ENCODE measurements at regions of chr11 and their contacts with region 1.

Region 1: GRCh38 chr11:12963792-12964536 is 45.2 kb upstream of the RASSF10 start:
- DNase-seq: peak; percentile 80
- ATAC-seq: peak; percentile 93
- H3K4me3 ChIP-seq: no peak overlapping the region
- H3K27ac ChIP-seq: no peak overlapping the region
- H3K4me1 ChIP-seq: peaks cover 18% of the 10 kb centered on the region
- H3K27me3 ChIP-seq: no peaks in the 10 kb centered on the region
- CTCF ChIP-seq: peak; percentile 94

Region 2: GRCh38 chr11:12331239-12331874 is 632.6 kb before region 1 on chr11:
- CTCF ChIA-PET with region 1: interaction called, 5 read pairs
- POLR2A ChIA-PET with region 1: no interaction called
- intact Hi-C with region 1: loop called (anchors 1 kb)
- DNase-seq: peak; percentile 93
- ATAC-seq: peak; percentile 87
- H3K4me3 ChIP-seq: no peak overlapping the region
- H3K27ac ChIP-seq: no peak overlapping the region
- H3K4me1 ChIP-seq: no peaks in the 10 kb centered on the region
- H3K27me3 ChIP-seq: no peaks in the 10 kb centered on the region
- CTCF ChIP-seq: peak; percentile 87

Region 3: DNA sequence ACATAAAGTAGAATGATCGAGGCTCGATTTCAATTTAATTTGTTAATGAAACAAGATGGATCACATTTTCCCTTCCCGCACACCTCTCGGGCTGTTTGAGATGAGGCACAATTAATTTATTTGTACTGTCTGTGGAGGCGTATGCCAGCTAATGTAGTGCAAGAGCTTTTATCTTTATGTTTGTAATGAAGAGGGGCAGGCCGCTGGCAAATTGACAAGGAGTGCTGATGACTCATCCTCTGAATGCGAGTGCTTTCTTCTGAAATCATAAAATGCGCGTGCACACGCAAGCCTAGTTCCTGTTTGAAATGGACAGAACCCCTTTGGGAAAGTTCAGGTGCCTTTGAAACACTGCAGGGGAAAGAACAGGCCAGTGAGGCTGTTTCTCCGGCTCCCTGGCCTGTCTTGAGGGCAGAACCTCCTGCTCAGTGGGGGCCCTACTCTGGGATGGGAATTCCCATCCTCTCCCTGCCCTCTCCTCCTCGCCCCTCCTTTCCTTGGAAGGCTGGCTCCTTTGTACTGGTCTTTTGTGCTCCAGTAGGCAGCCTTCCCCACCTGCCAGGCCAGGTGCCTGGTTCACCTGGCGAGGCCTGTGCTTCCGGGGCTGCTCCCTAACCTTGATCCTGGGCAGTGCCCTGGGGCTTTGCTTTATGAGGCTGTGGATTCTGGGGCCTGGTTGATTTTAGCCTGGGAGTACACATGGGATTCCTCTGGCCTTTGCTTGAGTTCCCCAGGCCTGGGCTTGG is 239.5 kb before region 1 on chr11:
- CTCF ChIA-PET with region 1: no interaction called
- POLR2A ChIA-PET with region 1: interaction called, 13 read pairs
- intact Hi-C with region 1: no loop called
- DNase-seq: peak; percentile 96
- ATAC-seq: peak; percentile 51
- H3K4me3 ChIP-seq: peak overlapping the region; percentile 62
- H3K27ac ChIP-seq: peak overlapping the region; percentile 99
- H3K4me1 ChIP-seq: peaks cover 91% of the 10 kb centered on the region
- H3K27me3 ChIP-seq: no peaks in the 10 kb centered on the region
- CTCF ChIP-seq: no peak

Region 4: GRCh38 chr11:12914400-12914912 is 49.5 kb before region 1 on chr11:
- CTCF ChIA-PET with region 1: interaction called, 6 read pairs
- POLR2A ChIA-PET with region 1: no interaction called
- intact Hi-C with region 1: loop called (anchors 5 kb)
- DNase-seq: peak; percentile 30
- ATAC-seq: peak; percentile 68
- H3K4me3 ChIP-seq: no peak overlapping the region
- H3K27ac ChIP-seq: no peak overlapping the region
- H3K4me1 ChIP-seq: no peaks in the 10 kb centered on the region
- H3K27me3 ChIP-seq: no peaks in the 10 kb centered on the region
- CTCF ChIP-seq: peak; percentile 73

Region 5: GRCh38 chr11:13126430-13126829 is 162.5 kb after region 1 on chr11:
- CTCF ChIA-PET with region 1: no interaction called
- POLR2A ChIA-PET with region 1: no interaction called
- intact Hi-C with region 1: no loop called
- DNase-seq: peak; percentile 98
- ATAC-seq: peak; percentile 99
- H3K4me3 ChIP-seq: no peak overlapping the region
- H3K27ac ChIP-seq: peak overlapping the region; percentile 80
- H3K4me1 ChIP-seq: peaks cover 14% of the 10 kb centered on the region
- H3K27me3 ChIP-seq: no peaks in the 10 kb centered on the region
- CTCF ChIP-seq: no peak

Region 6: DNA sequence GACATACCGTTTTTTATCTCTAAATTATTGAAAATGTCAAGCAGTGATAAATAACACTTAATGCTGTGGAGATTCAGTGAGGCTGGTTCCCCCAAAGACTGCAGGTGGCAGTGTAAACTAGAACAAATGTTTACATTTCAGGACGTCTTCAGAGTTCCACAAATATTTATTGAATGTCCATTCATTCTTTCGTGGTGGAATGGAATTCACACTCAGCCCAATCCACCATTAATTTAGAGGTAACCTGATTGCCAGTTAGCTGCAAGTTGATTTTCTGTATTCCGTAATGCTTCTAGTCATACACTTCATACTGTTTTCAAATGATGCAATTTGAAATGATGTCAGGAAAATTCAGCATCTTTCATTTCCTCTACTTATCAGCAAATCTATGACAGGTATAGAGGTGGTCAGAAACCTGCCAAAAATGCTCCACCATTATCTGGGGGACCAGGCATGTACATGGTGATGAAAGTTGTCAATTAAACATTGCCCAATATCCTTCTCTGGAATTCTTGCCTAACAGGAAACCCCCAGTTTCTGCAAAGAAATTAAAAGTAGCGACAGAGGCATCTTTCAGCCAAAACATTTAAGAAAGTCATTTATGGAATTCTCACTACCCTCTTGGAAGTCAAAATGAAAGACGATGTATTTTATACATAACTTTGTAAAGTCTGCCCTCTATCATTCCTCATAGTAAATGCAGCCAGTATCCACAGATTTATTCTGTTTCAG is 219.3 kb after region 1 on chr11:
- CTCF ChIA-PET with region 1: interaction called, 5 read pairs
- POLR2A ChIA-PET with region 1: no interaction called
- intact Hi-C with region 1: loop called (anchors 1 kb)
- DNase-seq: peak; percentile 66
- ATAC-seq: peak; percentile 92
- H3K4me3 ChIP-seq: peak overlapping the region; percentile 59
- H3K27ac ChIP-seq: no peak overlapping the region
- H3K4me1 ChIP-seq: peaks cover 3% of the 10 kb centered on the region; the same call in 1 of the 2 replicates
- H3K27me3 ChIP-seq: no peaks in the 10 kb centered on the region
- CTCF ChIP-seq: peak; percentile 61

Measured in PC-3 (cell line).